CD8-positive, alpha-beta memory T cell (primary cell): ENCODE measurements at regions of chr7 and their contacts with region 1.

Region 1: GRCh38 chr7:150898475-150899011 is 46.2 kb downstream of the AOC1 start:
- DNase-seq: peak; percentile 61 to 80 (median 66)
- H3K4me3 ChIP-seq: no peak overlapping the region
- H3K4me3 Mint-ChIP-seq: peak overlapping the region in 4 of 7 donors; percentile 12 to 75 (median 30)
- H3K27ac ChIP-seq: no peak overlapping the region
- H3K27ac Mint-ChIP-seq: peak overlapping the region in 2 of 8 donors; percentile 4 to 60
- H3K4me1 ChIP-seq: peaks cover 8% of the 10 kb centered on the region
- H3K4me1 Mint-ChIP-seq: peaks cover 5 to 15% (median 8%) of the 10 kb centered on the region in 3 donors
- H3K27me3 ChIP-seq: peaks cover 13% of the 10 kb centered on the region
- H3K27me3 Mint-ChIP-seq: peaks cover 34 to 79% of the 10 kb centered on the region in 2 donors

Region 2: DNA sequence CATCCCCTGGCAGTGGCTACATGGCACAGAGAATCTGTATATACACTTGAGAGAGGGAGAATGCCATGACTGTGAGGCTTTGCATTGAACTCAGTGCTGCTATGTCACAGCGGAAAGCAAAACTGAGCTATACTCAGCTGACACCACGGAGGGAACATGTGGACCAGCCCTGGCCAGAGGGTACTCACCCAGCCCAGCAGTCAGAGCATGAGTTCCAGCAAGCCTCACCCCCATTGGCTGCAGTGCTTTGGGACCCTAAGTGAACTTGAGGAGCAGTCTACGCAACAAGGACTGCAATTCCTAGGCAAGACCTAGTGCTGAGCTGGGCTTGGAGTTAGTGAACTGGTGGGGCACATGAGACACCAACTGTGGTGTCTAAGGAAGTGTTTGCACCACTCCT is 56.5 kb before region 1 on chr7:
- CTCF ChIA-PET with region 1: no interaction called
- POLR2A ChIA-PET with region 1: no interaction called
- DNase-seq: no peak
- H3K4me3 ChIP-seq: no peak overlapping the region
- H3K4me3 Mint-ChIP-seq: no peak overlapping the region
- H3K27ac ChIP-seq: no peak overlapping the region
- H3K27ac Mint-ChIP-seq: no peak overlapping the region
- H3K4me1 ChIP-seq: no peaks in the 10 kb centered on the region
- H3K4me1 Mint-ChIP-seq: no peaks in the 10 kb centered on the region
- H3K27me3 ChIP-seq: no peaks in the 10 kb centered on the region
- H3K27me3 Mint-ChIP-seq: no peaks in the 10 kb centered on the region

Region 3: GRCh38 chr7:150876817-150877526 is 21.6 kb before region 1 on chr7:
- CTCF ChIA-PET with region 1: interaction called, 13 read pairs
- POLR2A ChIA-PET with region 1: no interaction called
- DNase-seq: peak; percentile 17 to 58 (median 31)
- H3K4me3 ChIP-seq: no peak overlapping the region
- H3K4me3 Mint-ChIP-seq: peak overlapping the region in 5 of 7 donors; percentile 27 to 54 (median 42)
- H3K27ac ChIP-seq: no peak overlapping the region
- H3K27ac Mint-ChIP-seq: peak overlapping the region in 6 of 8 donors; percentile 14 to 93 (median 77)
- H3K4me1 ChIP-seq: peaks cover 12% of the 10 kb centered on the region
- H3K4me1 Mint-ChIP-seq: peaks cover 22 to 35% (median 22%) of the 10 kb centered on the region in 3 donors
- H3K27me3 ChIP-seq: no peaks in the 10 kb centered on the region
- H3K27me3 Mint-ChIP-seq: peaks cover 0 to 5% of the 10 kb centered on the region in 2 donors

Region 4: GRCh38 chr7:150931199-150931869 is 32.8 kb after region 1 on chr7:
- CTCF ChIA-PET with region 1: interaction called, 14 read pairs
- POLR2A ChIA-PET with region 1: no interaction called
- DNase-seq: peak in 3 of 5 donors; percentile 30 to 66 (median 35)
- H3K4me3 ChIP-seq: no peak overlapping the region
- H3K4me3 Mint-ChIP-seq: no peak overlapping the region
- H3K27ac ChIP-seq: no peak overlapping the region
- H3K27ac Mint-ChIP-seq: no peak overlapping the region
- H3K4me1 ChIP-seq: peaks cover 6% of the 10 kb centered on the region
- H3K4me1 Mint-ChIP-seq: peaks cover 5 to 7% (median 5%) of the 10 kb centered on the region in 3 donors
- H3K27me3 ChIP-seq: no peaks in the 10 kb centered on the region
- H3K27me3 Mint-ChIP-seq: peaks cover 0 to 5% of the 10 kb centered on the region in 2 donors

Region 5: DNA sequence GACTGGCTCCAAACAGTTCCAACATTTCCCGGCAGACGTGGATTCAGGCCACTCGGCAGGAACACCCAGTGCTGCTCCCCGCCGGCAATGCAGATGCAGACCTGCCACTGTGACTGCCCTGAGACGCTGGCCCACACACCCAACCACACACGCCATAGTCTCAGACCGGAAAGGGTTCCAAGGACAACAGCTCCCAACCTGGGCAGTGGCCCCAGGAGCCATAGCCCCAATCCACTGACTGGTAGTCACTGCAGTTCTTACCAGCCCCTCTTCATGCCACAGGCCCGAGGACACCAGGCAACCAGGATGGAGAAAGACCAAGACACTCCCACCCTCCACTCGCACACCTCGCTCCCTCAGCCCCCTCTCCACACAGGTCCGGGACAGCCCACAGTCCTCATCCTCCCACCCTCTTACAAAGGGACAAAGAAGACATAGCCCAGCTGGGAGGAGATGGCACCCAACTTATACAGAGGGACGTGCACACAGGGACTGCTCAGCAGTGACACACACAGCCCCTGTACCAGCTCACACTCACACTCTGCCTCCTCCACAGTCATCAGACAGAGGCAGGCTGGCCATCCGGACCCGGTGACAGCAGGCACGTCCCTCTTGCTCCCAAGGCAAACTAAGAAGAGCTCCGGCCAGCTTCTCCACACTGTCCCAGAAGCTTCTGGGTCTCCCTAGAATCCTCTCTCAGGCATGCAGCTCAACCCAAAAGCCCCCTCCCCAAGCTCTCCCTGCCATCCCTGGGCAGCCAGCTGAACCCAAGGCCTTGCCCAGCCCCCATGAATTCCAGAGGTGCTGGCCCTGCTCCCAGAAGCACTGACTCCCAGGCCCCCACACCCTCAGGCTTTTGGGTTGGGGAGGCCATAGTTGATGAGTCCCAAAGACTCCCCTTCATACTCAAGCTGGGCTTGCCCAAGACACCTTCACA is 54.8 kb after region 1 on chr7:
- CTCF ChIA-PET with region 1: interaction called, 11 read pairs
- POLR2A ChIA-PET with region 1: no interaction called
- DNase-seq: peak in 1 of 5 donors; percentile 25
- H3K4me3 ChIP-seq: no peak overlapping the region
- H3K4me3 Mint-ChIP-seq: no peak overlapping the region
- H3K27ac ChIP-seq: peak overlapping the region; percentile 79
- H3K27ac Mint-ChIP-seq: no peak overlapping the region
- H3K4me1 ChIP-seq: no peaks in the 10 kb centered on the region
- H3K4me1 Mint-ChIP-seq: peaks cover 2 to 7% (median 3%) of the 10 kb centered on the region in 3 donors
- H3K27me3 ChIP-seq: no peaks in the 10 kb centered on the region
- H3K27me3 Mint-ChIP-seq: peaks cover 23 to 30% of the 10 kb centered on the region in 2 donors

Region 6: GRCh38 chr7:151008511-151009323 is 110.2 kb after region 1 on chr7:
- CTCF ChIA-PET with region 1: interaction called, 10 read pairs
- POLR2A ChIA-PET with region 1: no interaction called
- DNase-seq: peak; percentile 70 to 85 (median 79)
- H3K4me3 ChIP-seq: peak overlapping the region; percentile 44
- H3K4me3 Mint-ChIP-seq: peak overlapping the region; percentile 75 to 93 (median 83)
- H3K27ac ChIP-seq: peak overlapping the region; percentile 66
- H3K27ac Mint-ChIP-seq: peak overlapping the region; percentile 70 to 97 (median 93)
- H3K4me1 ChIP-seq: peaks cover 65% of the 10 kb centered on the region
- H3K4me1 Mint-ChIP-seq: peaks cover 48 to 65% (median 55%) of the 10 kb centered on the region in 3 donors
- H3K27me3 ChIP-seq: no peaks in the 10 kb centered on the region
- H3K27me3 Mint-ChIP-seq: peaks cover 0 to 6% of the 10 kb centered on the region in 2 donors

Region 7: GRCh38 chr7:151110941-151111645 is 212.6 kb after region 1 on chr7:
- CTCF ChIA-PET with region 1: interaction called, 26 read pairs
- POLR2A ChIA-PET with region 1: no interaction called
- DNase-seq: peak; percentile 54 to 82 (median 64)
- H3K4me3 ChIP-seq: no peak overlapping the region
- H3K4me3 Mint-ChIP-seq: no peak overlapping the region
- H3K27ac ChIP-seq: no peak overlapping the region
- H3K27ac Mint-ChIP-seq: peak overlapping the region in 2 of 8 donors; percentile 9 to 58
- H3K4me1 ChIP-seq: peaks cover 8% of the 10 kb centered on the region
- H3K4me1 Mint-ChIP-seq: peaks cover 0 to 15% (median 4%) of the 10 kb centered on the region in 3 donors
- H3K27me3 ChIP-seq: no peaks in the 10 kb centered on the region
- H3K27me3 Mint-ChIP-seq: peaks cover 4 to 5% of the 10 kb centered on the region in 2 donors